ENCODE measurements at regions of chr19 and their contacts with region 1.

Region 1: GRCh38 chr19:4723367-4724187 is at the start of gene DPP9:
- DNase-seq: peak; percentile 97 to 99 (median 98)
- ATAC-seq: peak; percentile 96 to 97 (median 96)
- H3K4me3 ChIP-seq: peak within 1 kb of the TSS; percentile 75 to 99 (median 94)
- H3K27ac ChIP-seq: peak within 1 kb of the TSS; percentile 83 to 97 (median 93)
- H3K4me1 ChIP-seq: peaks cover 0 to 43% (median 16%) of the 10 kb centered on the region in 12 donors
- H3K27me3 ChIP-seq: no peaks in the 10 kb centered on the region
- CTCF ChIP-seq: peak in 9 of 12 donors; percentile 25 to 55 (median 32)
- POLR2A ChIP-seq: peak in 1 of 2 donors; percentile 72
- total RNA-seq, gene DPP9: 38.9 to 65.2 (median 47.7) TPM

Region 2: GRCh38 chr19:4669723-4670480 is 53.7 kb before region 1 on chr19 and contains the start of gene MYDGF:
- intact Hi-C with region 1: loop called in 2 of 10 experiments (anchors 5 kb)
- DNase-seq: peak; percentile 94 to 97 (median 95)
- ATAC-seq: peak; percentile 97 to 99 (median 98)
- H3K4me3 ChIP-seq: peak within 1 kb of the TSS; percentile 53 to 95 (median 86)
- H3K27ac ChIP-seq: peak within 1 kb of the TSS; percentile 29 to 85 (median 76)
- H3K4me1 ChIP-seq: peaks cover 0 to 30% (median 20%) of the 10 kb centered on the region in 12 donors
- H3K27me3 ChIP-seq: no peaks in the 10 kb centered on the region
- CTCF ChIP-seq: no peak
- POLR2A ChIP-seq: peak in 1 of 2 donors; percentile 57
- total RNA-seq, gene MYDGF: 19.1 to 49.1 (median 25.5) TPM

Region 3: DNA sequence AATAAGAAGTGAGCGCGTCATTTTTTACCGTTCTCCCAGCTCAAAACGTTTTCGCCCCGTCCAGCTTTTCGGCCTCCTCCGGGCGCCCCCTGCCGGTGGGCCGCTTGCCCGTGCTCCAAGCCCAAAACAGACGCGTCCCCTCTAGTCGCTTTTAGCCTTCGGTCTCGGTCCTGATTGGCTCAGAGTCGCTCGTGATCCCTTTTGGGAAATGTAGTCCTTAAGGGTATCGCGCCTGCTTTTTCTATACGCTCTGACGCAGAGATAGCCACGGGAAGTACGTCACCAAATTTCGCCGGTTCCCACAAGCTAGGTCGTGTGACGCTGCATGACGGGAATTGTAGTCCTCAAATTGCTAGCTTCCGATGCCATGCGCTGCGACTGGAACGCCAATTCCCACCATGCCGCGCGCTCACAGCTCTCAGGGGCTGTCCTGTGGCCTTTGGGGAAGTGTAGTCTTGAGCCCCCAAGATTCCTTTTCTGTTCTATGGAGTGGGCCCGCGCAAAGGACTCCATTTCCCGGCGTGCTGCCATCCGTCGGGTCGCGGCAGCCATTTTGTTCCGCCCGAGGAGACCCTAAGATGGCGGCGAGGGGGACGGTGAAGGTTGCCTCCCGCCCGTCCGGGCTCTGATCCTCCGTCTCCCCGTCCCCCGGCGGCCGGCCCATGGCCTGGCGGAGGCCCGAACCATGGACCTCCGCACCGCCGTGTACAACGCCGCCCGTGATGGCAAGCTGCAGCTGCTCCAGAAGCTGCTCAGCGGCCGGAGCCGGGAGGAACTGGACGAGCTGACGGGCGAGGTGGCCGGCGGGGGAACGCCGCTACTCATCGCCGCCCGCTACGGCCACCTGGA is 67.8 kb after region 1 on chr19 and contains the start of gene FEM1A:
- intact Hi-C with region 1: loop called in 3 of 10 experiments (anchors 1 to 5 kb)
- DNase-seq: peak; percentile 99 to 100 (median 100)
- ATAC-seq: peak; percentile 99
- H3K4me3 ChIP-seq: peak within 1 kb of the TSS; percentile 74 to 98 (median 94)
- H3K27ac ChIP-seq: peak within 1 kb of the TSS; percentile 90 to 98 (median 95)
- H3K4me1 ChIP-seq: peaks cover 0 to 49% (median 35%) of the 10 kb centered on the region in 12 donors
- H3K27me3 ChIP-seq: no peaks in the 10 kb centered on the region
- CTCF ChIP-seq: peak; percentile 95 to 100 (median 98)
- POLR2A ChIP-seq: peak; percentile 7 to 71
- total RNA-seq, gene FEM1A: 30.7 to 94.0 (median 41.8) TPM

Region 4: DNA sequence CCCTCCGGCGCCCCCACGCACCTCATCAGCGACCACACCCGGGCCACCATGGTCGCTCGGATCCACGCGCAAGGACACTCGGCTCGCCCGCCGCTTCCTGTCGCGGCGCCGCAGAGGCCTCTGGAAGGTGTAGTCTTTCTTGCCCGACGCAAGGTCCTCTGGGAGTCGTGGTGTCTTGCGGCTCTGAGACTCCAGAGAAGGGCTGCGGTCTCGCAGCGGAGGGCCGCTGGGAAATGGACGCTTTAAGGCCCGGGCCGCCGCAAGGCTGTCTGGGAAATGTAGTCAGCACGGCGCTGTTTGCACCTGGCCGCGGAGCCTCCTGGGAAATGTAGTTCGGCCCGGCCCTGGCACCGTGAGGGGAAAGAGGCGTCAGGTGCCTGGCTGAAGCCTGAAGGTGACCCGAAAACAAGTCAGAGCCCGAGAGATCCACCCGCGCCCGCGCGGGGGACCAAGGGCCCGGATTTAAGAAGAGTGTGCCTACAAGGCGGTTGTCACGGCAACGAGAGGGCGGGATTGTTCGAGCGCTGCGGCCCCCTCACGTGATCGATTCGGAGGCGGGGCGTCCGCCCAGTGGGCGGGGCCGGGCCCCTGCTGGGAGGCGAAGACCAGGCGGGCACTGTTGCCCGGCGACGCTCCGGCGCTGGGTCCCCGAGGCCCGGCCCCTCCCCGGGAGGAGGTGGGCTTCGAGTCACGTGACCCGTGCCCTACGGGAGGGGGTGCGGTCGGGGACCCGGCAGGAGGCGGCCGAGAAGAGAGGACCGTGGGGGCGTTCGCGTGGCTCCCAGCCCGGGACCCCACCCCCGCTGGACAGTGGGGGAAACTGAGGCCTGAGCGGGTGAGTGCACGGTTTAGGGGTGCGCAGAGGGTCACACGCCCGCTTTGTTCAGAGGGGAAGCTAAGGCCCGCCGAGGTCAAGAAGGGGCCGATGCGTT is 957.1 kb after region 1 on chr19 and contains the starts of genes HSD11B1L and MICOS13:
- intact Hi-C with region 1: loop called in 1 of 10 experiments (anchors 5 kb)
- DNase-seq: peak; percentile 99 to 100 (median 99)
- ATAC-seq: peak; percentile 93 to 97 (median 94)
- H3K4me3 ChIP-seq: peak within 1 kb of the TSS; percentile 61 to 99 (median 78)
- H3K27ac ChIP-seq: peak within 1 kb of the TSS; percentile 74 to 96 (median 90)
- H3K4me1 ChIP-seq: peaks cover 0 to 30% (median 15%) of the 10 kb centered on the region in 12 donors
- H3K27me3 ChIP-seq: no peaks in the 10 kb centered on the region
- CTCF ChIP-seq: no peak
- POLR2A ChIP-seq: peak in 1 of 2 donors; percentile 77
- total RNA-seq, gene HSD11B1L: 3.7 to 14.4 (median 5.2) TPM
- total RNA-seq, gene MICOS13: 103 to 149 (median 123) TPM